ENCODE measurements at regions of chr10 and their contacts with region 1.

Region 1: DNA sequence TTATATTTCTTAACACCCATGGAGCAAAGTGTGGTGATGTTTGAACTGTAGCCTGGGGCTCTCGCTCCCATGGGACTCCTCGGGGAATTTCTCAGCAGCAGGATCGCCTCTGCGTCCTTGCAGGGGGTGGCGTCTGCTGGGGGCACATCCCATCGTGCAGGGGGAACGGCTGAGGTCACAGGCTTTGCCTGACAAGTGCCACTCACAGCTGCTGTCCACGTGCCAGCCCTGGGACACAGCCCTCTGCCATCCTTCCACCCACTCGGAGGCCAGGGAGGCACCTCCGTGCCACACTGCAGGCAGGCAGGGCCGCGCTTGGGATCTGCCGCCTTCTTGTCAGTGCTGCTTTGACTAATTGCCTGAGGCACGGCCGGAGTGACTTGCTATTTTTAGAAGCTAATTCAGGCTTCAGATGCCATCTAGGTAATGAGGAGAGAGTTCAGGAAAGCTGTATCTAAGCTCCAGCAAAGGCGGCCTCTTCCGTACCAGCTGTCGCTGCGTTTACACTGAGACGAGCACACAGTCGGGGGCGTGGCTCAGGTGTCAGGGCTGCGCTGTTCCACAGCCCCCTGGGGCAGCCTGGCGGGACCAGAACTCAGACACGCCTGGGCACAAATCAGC is 45.7 kb downstream of the PITRM1 start:
- DNase-seq: peak; percentile 74

Region 2: DNA sequence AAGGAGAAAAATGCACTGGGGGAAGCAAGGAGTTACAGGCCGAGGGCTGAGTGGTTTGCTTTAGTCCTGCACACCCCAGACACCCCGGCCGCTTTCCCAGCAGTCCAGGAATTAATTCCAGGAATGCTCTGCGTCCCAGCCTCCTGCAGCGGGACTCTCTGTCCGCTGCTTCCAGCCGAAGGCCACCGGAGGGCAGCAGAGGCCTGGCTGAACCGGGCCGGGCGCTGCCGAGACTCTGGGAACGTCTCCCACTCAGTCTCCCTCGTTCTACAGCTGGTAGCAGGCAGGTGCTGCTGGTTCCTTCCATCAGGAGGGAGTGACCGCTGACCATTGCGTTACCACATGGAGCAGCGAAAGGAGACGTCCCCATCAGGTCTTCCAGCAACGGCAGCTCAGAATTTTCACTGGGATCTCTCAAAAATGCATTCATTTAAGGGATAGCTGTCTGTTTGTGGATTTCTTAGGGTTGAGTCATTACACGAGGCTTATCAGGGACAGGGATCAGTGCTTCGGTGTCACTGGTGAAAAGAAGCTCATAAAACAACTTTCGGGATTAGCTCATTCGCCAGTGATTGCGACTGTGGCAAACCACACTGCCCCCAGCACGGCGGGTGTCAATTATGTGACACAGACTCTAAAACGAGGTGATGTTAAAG is 70.6 kb after region 1 on chr10:
- intact Hi-C with region 1: no loop called
- DNase-seq: peak; percentile 94

Region 3: DNA sequence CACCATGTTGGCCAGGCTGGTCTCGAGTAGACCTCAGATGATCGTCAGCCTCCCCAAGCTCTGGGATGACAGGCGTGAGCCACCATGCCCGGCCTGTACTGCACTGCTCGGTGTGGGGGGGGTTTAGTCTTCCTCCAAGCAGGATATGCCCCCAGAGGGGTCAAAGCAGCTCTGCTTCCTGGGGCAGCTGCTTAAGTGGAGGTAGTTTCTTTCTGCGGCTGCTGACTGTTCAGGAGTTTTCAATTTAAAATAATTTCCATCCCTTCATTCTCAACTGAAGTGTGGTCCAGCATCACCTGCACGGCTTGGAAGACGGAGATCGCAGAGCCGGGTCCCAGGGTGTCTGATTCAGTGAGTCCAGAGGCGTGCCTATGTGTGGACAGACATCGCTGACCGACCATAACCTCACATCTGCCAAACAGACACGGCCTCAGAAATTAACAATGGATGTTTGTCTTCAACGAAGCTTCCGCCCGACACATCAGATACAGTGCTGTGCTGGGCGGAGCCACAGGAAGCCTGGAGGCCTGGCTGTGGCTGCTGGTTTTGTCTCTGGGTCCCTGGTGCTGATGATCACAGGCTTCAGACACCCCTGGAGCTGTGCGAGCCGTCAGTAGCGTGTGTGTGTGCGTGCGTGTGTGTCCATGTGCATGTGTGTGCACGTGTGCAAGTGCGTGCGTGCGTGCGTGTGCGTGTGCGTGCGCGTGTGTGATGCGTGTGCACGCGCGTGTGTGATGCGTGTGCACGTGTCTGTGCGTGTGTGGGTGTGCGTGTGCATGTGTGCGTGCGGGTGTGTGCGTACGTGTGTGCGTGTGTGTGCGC is 272.2 kb after region 1 on chr10:
- intact Hi-C with region 1: loop called in 1 of 2 experiments (anchors 5 kb)
- DNase-seq: peak; percentile 72

Measured in posterior vena cava (tissue), 2 donors.